Activated CD8-positive, alpha-beta T cell treated with anti-CD3 and anti-CD28 coated beads for 36 hours (primary cell): ENCODE measurements at regions of chr7 and their contacts with region 1.

Region 1: GRCh38 chr7:82605247-82605872 is 161.8 kb upstream of the CACNA2D1 start:
- DNase-seq: peak; percentile 40
- ATAC-seq: peak; percentile 51
- H3K4me3 Mint-ChIP-seq: no peak overlapping the region
- H3K27ac Mint-ChIP-seq: no peak overlapping the region
- H3K4me1 Mint-ChIP-seq: no peaks in the 10 kb centered on the region
- H3K27me3 Mint-ChIP-seq: no peaks in the 10 kb centered on the region
- CTCF ChIP-seq: peak; percentile 85

Region 2: DNA sequence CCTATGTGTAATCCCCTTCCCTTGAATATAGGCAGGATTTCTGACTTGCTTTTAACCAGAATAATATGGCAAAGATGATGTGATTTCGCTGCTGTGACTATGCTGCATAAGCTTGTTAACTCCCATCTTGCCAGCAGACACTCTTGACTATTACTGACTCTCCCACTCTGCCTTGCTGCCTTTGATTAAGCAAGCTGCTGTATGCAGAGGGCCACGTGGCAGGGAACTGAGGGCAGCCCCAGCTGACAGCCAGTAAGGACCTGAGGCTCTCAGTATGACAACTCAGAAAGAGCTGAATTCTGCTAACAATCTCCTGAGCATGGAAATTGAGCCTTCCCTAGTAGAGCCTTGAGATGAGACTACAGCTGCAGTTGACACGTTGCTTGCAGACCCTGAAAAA is 117.6 kb after region 1 on chr7:
- CTCF ChIA-PET with region 1: interaction called, 13 read pairs
- POLR2A ChIA-PET with region 1: no interaction called
- intact Hi-C with region 1: no loop called
- DNase-seq: no peak
- ATAC-seq: no peak
- H3K4me3 Mint-ChIP-seq: no peak overlapping the region
- H3K27ac Mint-ChIP-seq: no peak overlapping the region
- H3K4me1 Mint-ChIP-seq: no peaks in the 10 kb centered on the region
- H3K27me3 Mint-ChIP-seq: no peaks in the 10 kb centered on the region
- CTCF ChIP-seq: no peak